ENCODE measurements at regions of chr6 and their contacts with region 1.

Region 1: DNA sequence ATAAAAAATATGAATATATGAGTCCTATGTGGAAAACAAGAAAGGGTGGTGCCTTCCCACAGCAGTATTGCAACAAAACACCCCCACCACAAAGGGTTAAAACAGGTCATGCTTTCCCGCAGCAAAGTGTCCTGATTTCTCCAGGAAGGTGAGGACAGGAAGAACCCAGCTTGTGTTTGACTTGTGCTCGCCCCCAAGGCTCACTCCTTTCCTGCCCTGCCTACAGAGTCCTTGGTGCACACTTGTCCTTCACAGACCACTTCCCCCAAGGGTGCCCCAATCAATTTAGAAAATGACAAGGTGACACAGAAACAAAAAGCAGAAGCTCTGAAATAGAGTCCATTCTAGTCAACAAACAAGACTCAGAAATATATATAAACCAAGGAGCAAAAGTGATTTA is 237.4 kb downstream of the PTPRK start:
- DNase-seq: no peak
- ATAC-seq: no peak
- H3K4me3 ChIP-seq: no peak overlapping the region
- H3K27ac ChIP-seq: no peak overlapping the region
- H3K4me1 ChIP-seq: peaks cover 0 to 2% of the 10 kb centered on the region in 2 donors
- H3K27me3 ChIP-seq: no peaks in the 10 kb centered on the region

Region 2: DNA sequence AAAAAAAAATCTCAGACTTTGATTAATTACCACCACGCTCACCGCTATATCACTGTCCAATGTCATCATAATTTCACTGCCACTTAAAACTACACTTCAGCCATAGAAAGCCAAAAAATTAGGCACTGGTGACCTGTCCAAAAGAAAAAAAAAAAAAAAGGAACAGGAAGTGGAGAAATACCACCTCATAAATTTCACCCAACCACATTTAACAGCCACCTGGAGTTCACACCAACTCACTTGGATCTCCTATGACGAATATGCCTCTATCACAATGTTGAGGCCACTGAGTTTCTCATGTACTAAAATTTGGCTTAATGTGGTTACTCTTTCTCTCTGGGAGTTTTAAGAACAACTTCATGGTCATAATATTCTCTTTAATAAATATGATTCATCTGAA is 1402.0 kb before region 1 on chr6:
- intact Hi-C with region 1: no loop called
- DNase-seq: no peak
- ATAC-seq: no peak
- H3K4me3 ChIP-seq: no peak overlapping the region
- H3K27ac ChIP-seq: no peak overlapping the region
- H3K4me1 ChIP-seq: no peaks in the 10 kb centered on the region
- H3K27me3 ChIP-seq: no peaks in the 10 kb centered on the region

Region 3: GRCh38 chr6:128068116-128068479 is 214.9 kb before region 1 on chr6:
- intact Hi-C with region 1: no loop called
- DNase-seq: no peak
- ATAC-seq: no peak
- H3K4me3 ChIP-seq: no peak overlapping the region
- H3K27ac ChIP-seq: no peak overlapping the region
- H3K4me1 ChIP-seq: no peaks in the 10 kb centered on the region
- H3K27me3 ChIP-seq: no peaks in the 10 kb centered on the region

Region 4: DNA sequence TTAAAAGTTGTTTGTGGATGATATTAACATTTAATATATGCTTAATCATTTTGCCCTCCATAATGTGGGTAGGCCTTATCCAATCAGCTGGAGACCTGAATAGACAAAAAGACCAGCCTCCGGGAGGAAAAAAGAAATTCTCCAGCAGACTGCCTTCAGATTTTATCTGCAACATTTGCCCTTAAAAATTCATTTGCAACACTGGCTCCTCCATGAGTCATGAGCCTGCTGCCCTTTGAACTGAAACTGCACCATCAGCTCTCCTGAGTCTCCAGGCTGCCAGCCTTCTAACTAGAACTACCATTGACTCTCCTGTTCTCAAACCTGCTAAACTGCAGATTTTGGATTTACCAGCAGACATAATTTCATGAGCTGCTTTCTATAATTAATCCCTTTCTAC is 158.3 kb before region 1 on chr6:
- intact Hi-C with region 1: no loop called
- DNase-seq: no peak
- ATAC-seq: no peak
- H3K4me3 ChIP-seq: no peak overlapping the region
- H3K27ac ChIP-seq: no peak overlapping the region
- H3K4me1 ChIP-seq: no peaks in the 10 kb centered on the region
- H3K27me3 ChIP-seq: no peaks in the 10 kb centered on the region

Region 5: GRCh38 chr6:128655978-128656498 is 373.1 kb after region 1 on chr6:
- intact Hi-C with region 1: loop called in 1 of 2 experiments (anchors 5 kb)
- DNase-seq: no peak
- ATAC-seq: no peak
- H3K4me3 ChIP-seq: no peak overlapping the region
- H3K27ac ChIP-seq: no peak overlapping the region
- H3K4me1 ChIP-seq: no peaks in the 10 kb centered on the region
- H3K27me3 ChIP-seq: no peaks in the 10 kb centered on the region

Region 6: DNA sequence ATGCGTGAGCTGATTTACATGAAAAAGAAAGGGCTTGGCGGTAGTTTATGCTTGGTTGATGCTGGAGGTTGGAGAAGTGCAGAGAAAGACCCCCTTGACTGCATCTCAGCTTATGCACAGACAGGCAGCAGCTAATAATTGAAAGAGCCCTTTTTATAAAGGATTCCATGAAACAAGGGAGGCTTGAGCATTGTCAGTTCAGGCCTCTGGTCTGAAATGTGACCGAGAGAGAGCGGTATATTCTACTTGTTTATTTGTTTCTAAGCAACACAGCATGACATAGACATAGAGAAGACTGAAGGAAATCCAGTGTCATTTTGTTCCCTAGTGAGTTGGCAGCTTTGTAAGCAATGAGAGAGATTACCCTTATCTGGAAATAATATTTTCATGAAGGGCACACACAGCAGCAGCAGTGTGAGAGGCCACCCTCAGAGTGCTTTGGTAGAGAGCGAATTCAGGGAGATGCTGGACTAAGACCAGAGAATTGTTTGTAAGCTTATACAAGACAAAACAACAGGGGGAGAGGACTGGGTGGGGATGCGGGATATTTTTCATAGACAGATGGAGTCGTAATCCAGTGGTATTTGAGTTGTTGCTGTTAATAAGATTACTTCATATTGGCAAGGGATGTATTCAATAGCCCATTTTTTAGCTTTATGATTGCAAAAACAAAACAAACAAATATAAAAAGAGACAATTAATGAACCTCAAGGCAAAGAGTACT is 565.4 kb after region 1 on chr6:
- intact Hi-C with region 1: no loop called
- DNase-seq: no peak
- ATAC-seq: no peak
- H3K4me3 ChIP-seq: no peak overlapping the region
- H3K27ac ChIP-seq: no peak overlapping the region
- H3K4me1 ChIP-seq: no peaks in the 10 kb centered on the region
- H3K27me3 ChIP-seq: no peaks in the 10 kb centered on the region